Sciatic nerve (tissue), 2 donors: ENCODE measurements at regions of chr5 and their contacts with region 1.

Region 1: GRCh38 chr5:79546782-79547428 is 33.0 kb upstream of the HOMER1 start:
- DNase-seq: no peak
- ATAC-seq: peak; percentile 32

Region 2: GRCh38 chr5:80069918-80070318 is 523.0 kb after region 1 on chr5:
- intact Hi-C with region 1: loop called (anchors 10 kb)
- DNase-seq: no peak
- ATAC-seq: peak; percentile 43